ENCODE measurements at regions of chr7 and their contacts with region 1.

Region 1: GRCh38 chr7:100611974-100612729 is at the start of gene MOSPD3:
- DNase-seq: peak; percentile 98 to 99
- ATAC-seq: peak; percentile 91 to 97 (median 91)
- H3K4me3 ChIP-seq: peak within 1 kb of the TSS; percentile 91
- H3K4me3 Mint-ChIP-seq: peak within 1 kb of the TSS; percentile 99
- H3K27ac ChIP-seq: peak within 1 kb of the TSS; percentile 91
- H3K27ac Mint-ChIP-seq: peak within 1 kb of the TSS; percentile 99
- H3K4me1 ChIP-seq: peaks cover 23% of the 10 kb centered on the region
- H3K4me1 Mint-ChIP-seq: peaks cover 16 to 27% of the 10 kb centered on the region in 2 donors
- H3K27me3 ChIP-seq: no peaks in the 10 kb centered on the region
- H3K27me3 Mint-ChIP-seq: no peaks in the 10 kb centered on the region
- CTCF ChIP-seq: no peak
- total RNA-seq, gene MOSPD3: 14.5 to 15.9 (median 15.5) TPM

Region 2: DNA sequence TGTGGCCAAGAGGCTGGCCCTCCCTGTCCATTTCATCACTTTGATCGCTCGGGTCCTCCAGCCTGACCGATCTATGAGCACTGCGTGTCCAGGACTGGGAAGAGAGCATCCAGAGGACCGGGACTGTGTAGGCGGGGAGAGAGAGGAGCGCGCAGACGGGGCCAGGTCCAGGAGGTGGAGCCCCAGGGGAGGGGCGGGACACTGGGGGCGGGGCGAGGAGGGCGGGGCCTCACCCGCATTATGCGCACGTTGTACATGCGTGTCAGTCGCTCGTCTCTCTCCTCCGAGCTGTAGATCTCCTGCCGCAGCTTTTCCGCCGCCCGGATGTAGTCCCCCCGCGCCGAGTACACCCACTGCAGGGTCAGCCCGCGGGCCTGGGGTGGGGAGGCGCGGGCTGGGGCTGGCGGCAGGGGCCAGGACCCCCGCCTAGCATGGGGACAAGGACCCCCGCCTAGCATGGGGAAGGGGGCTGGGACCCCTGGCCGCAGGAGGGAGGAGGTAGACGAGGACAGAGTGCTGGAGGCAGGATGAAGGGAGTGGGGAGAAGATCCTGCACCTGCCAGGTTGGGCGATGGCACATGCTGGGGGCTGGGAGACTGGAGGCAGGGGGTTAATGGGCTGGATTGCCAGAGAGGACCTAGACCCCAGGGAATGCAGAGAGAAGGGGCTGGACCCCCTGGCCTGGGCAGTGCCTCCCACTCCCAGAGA is 14.5 kb after region 1 on chr7:
- intact Hi-C with region 1: loop called (anchors 2 kb)
- DNase-seq: peak; percentile 67 to 93
- ATAC-seq: peak; percentile 97 to 99 (median 99)
- H3K4me3 ChIP-seq: peak overlapping the region; percentile 34
- H3K4me3 Mint-ChIP-seq: peak overlapping the region; percentile 79
- H3K27ac ChIP-seq: peak overlapping the region; percentile 83
- H3K27ac Mint-ChIP-seq: peak overlapping the region in 1 of 2 donors; percentile 76
- H3K4me1 ChIP-seq: peaks cover 19% of the 10 kb centered on the region
- H3K4me1 Mint-ChIP-seq: peaks cover 0 to 31% of the 10 kb centered on the region in 2 donors
- H3K27me3 ChIP-seq: no peaks in the 10 kb centered on the region
- H3K27me3 Mint-ChIP-seq: no peaks in the 10 kb centered on the region
- CTCF ChIP-seq: no peak

Region 3: DNA sequence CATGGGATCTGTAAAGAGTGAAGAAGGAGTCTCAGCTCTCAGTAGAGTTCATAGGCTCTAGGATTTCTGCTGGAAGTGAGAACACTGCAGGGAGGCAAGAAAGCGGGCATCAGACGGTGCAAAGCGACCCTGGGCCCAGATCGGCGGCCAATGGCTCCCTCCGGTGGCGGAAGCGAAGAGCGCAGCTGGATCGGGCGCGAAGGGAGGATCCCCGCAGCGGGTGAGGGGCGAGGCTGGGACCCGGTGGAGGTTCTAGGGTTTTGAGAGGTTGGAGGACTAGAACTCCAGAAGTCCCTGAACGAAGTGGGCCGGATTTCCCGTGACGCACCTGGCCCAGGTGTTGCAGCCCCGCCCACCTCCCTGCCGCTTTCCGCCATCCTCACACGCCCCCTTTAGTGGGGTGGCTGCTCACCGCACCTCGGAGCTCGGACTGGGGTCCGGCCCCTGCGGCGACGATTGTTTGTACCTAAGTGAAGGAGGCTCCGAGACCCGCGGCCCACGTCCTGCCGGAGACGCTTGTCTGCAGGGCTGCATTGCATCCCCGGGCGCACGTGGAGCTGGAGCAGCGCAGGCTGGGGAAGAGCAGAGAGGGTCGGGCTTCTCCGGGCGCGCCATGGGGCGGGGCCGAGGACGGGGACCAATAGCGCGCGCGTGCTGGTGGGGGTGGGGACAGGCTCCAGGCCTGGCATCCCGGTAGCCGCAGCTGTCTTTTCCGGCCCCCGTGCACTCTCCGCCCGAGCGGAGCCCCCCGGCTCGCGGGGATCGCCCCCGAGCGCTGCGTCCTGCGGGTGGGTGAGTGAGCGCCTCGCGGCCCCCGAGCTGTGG is 240.1 kb after region 1 on chr7 and contains the start of gene SLC12A9:
- intact Hi-C with region 1: no loop called
- DNase-seq: peak; percentile 71 to 91
- ATAC-seq: peak; percentile 90 to 94 (median 92)
- H3K4me3 ChIP-seq: peak within 1 kb of the TSS; percentile 71
- H3K4me3 Mint-ChIP-seq: peak within 1 kb of the TSS; percentile 97
- H3K27ac ChIP-seq: peak within 1 kb of the TSS; percentile 59
- H3K27ac Mint-ChIP-seq: peak within 1 kb of the TSS; percentile 71 to 87
- H3K4me1 ChIP-seq: peaks cover 28% of the 10 kb centered on the region
- H3K4me1 Mint-ChIP-seq: peaks cover 8 to 31% of the 10 kb centered on the region in 2 donors
- H3K27me3 ChIP-seq: no peaks in the 10 kb centered on the region
- H3K27me3 Mint-ChIP-seq: peaks cover 0 to 3% of the 10 kb centered on the region in 2 donors
- CTCF ChIP-seq: peak; percentile 98
- total RNA-seq, gene SLC12A9: 35.0 to 44.2 (median 38.1) TPM